Calu3 (cell line): ENCODE measurements at regions of chr7 and their contacts with region 1.

Region 1: GRCh38 chr7:131488361-131488760 is 68.1 kb downstream of the PODXL start:
- DNase-seq: no peak
- H3K4me3 Mint-ChIP-seq: no peak overlapping the region
- H3K27ac Mint-ChIP-seq: no peak overlapping the region
- H3K4me1 Mint-ChIP-seq: no peaks in the 10 kb centered on the region
- H3K27me3 Mint-ChIP-seq: no peaks in the 10 kb centered on the region
- CTCF ChIP-seq: no peak

Region 2: GRCh38 chr7:131327626-131328376 is 160.6 kb before region 1 on chr7 and contains the start of gene MKLN1:
- CTCF ChIA-PET with region 1: no interaction called
- intact Hi-C with region 1: no loop called
- DNase-seq: peak; percentile 93
- H3K4me3 Mint-ChIP-seq: peak within 1 kb of the TSS; percentile 99
- H3K27ac Mint-ChIP-seq: peak within 1 kb of the TSS; percentile 98
- H3K4me1 Mint-ChIP-seq: peaks cover 48% of the 10 kb centered on the region
- H3K27me3 Mint-ChIP-seq: no peaks in the 10 kb centered on the region
- CTCF ChIP-seq: no peak
- total RNA-seq, gene MKLN1: 36.8 and 47.1 TPM in 2 replicates

Region 3: DNA sequence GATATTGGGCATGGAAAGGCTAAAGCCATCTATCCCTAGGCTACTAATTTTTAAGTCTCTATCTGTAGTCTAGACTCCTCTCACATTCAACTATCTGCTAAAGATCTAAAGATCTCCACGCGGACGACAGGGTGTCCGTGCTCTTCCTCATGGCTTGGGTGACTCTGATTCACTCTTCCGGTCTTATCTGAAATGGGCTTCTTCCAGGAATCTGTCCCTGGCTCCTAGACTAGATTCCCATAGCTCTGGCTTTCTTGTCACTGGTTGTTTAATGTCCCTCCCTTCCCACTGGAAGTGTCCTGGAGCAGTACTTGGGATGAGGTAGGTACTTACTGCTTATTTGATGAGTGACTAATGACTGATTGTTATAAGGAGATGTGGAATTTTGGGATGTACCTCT is 130.0 kb after region 1 on chr7:
- CTCF ChIA-PET with region 1: interaction called, 10 read pairs
- intact Hi-C with region 1: no loop called
- DNase-seq: no peak
- H3K4me3 Mint-ChIP-seq: no peak overlapping the region
- H3K27ac Mint-ChIP-seq: no peak overlapping the region
- H3K4me1 Mint-ChIP-seq: no peaks in the 10 kb centered on the region
- H3K27me3 Mint-ChIP-seq: peaks cover 47% of the 10 kb centered on the region
- CTCF ChIP-seq: no peak